Ovary (tissue), 10 donors: ENCODE measurements at regions of chr1 and their contacts with region 1.

Region 1: DNA sequence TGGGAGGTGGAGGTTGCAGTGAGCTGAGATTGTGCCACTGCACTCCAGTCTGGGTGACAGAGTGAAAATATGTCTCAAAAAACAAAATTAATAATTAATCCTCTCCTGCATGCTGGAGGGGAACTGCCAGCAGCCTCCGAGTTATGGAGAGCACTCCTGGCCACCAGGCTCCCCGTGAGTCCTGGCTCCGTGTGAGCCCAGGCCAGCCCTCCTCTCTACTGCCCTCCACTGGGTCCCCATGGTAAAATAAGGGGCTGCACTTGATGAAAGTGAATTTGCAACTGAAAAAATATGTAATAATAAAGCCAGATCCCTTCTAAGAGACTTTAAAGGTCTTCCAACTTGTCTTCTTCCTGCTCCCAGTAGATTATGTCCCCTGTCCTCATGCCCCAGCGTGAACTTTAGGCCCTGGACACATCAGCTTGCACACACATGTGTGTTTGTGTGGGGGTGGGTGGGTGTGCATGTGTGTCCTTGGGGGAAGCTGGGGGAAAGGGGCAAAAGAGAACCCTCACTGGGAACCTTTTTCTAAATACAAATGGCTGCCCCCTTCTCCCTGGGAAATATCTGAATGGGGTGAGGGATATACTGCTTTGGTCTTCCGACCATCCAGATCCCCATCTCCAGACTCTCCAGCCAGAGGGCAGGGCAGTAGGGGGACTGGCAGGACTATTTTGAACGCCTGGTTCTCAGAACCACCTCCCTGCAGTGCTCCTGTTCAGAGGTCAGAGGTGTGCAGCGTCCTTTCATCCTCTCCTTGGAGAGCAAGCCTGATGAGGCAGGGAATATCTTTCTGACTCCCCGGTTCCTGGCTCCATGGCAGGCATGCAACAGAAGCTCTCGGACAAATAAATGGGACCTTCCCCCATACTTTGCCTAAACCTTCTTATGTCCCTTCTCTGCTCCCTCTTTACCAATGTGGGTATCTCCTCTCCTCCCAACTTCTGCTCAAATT is 26.2 kb downstream of the NEK2 start:
- DNase-seq: peak in 4 of 5 donors; percentile 1 to 71 (median 55)
- H3K4me3 ChIP-seq: no peak overlapping the region
- H3K27ac ChIP-seq: no peak overlapping the region
- H3K4me1 ChIP-seq: no peaks in the 10 kb centered on the region
- H3K27me3 ChIP-seq: no peaks in the 10 kb centered on the region
- CTCF ChIP-seq: peak in 2 of 3 donors; percentile 41 to 50
- EP300 ChIP-seq: no peak
- POLR2A ChIP-seq: no peak

Region 2: GRCh38 chr1:211578640-211579433 is 70.4 kb before region 1 on chr1 and contains the start of gene SLC30A1:
- intact Hi-C with region 1: loop called in 3 of 4 experiments (anchors 2 to 5 kb)
- DNase-seq: peak; percentile 100
- H3K4me3 ChIP-seq: peak within 1 kb of the TSS; percentile 71
- H3K27ac ChIP-seq: peak within 1 kb of the TSS; percentile 82 to 89
- H3K4me1 ChIP-seq: peaks cover 2% of the 10 kb centered on the region
- H3K27me3 ChIP-seq: no peaks in the 10 kb centered on the region
- CTCF ChIP-seq: peak in 1 of 3 donors; percentile 6
- EP300 ChIP-seq: peak; percentile 33
- POLR2A ChIP-seq: peak; percentile 79
- total RNA-seq, gene SLC30A1: 11.9 to 23.4 (median 18.9) TPM

Region 3: DNA sequence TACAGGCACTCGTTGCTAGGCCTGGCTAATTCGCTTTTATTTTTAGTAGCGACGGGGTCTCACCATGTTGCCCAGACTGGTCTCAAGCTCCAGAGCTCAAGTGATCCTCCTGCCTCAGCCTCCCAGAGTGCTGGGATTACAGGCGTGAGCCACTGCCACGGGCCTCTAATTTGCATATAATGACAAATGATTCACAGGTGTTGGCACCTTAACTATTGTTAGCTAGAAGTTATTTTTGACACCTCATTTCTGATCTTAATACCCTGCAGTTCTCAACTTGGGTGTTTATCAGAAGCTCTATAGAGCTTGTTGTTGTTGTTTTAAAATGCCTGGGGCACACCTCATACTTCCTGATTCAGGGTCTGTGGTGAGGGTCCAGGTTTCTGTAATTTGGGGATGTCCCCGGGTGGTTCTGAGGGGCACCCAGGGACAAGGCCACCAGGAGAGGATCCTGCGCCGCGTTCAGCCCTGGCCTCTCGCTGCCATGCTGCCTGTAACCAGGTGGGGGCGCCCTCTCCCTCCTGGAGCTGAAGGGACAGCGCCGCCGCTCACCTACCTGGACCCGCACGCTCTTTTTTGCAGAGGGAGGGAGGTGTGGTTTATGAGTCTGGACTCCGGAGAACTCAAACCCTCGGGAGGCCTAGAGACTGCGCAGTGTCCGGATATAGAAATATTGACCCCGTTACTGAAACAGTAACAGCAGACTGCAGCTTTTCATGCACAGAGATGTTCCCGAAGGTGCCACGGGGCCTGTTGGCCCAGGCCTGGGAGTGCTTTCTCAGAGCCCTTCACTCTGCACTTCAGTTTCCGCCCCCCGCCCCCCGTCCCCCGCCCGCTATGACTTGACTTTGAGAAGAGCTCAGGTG is 49.1 kb after region 1 on chr1:
- intact Hi-C with region 1: no loop called
- DNase-seq: peak; percentile 38 to 76 (median 54)
- H3K4me3 ChIP-seq: no peak overlapping the region
- H3K27ac ChIP-seq: no peak overlapping the region
- H3K4me1 ChIP-seq: no peaks in the 10 kb centered on the region
- H3K27me3 ChIP-seq: no peaks in the 10 kb centered on the region
- CTCF ChIP-seq: peak in 2 of 3 donors; percentile 32 to 65
- EP300 ChIP-seq: no peak
- POLR2A ChIP-seq: no peak

Region 4: GRCh38 chr1:211928993-211929637 is 279.9 kb after region 1 on chr1:
- intact Hi-C with region 1: no loop called
- DNase-seq: no peak
- H3K4me3 ChIP-seq: no peak overlapping the region
- H3K27ac ChIP-seq: no peak overlapping the region
- H3K4me1 ChIP-seq: no peaks in the 10 kb centered on the region
- H3K27me3 ChIP-seq: no peaks in the 10 kb centered on the region
- CTCF ChIP-seq: no peak
- EP300 ChIP-seq: no peak
- POLR2A ChIP-seq: no peak